RWPE1 (cell line): ENCODE measurements at regions of chr10 and their contacts with region 1.

Region 1: GRCh38 chr10:13787015-13787421 is 200.3 kb downstream of the PRPF18 start:
- DNase-seq: peak; percentile 39
- H3K27ac ChIP-seq: no peak overlapping the region
- CTCF ChIP-seq: no peak

Region 2: GRCh38 chr10:13659897-13660550 is 127.0 kb before region 1 on chr10:
- CTCF ChIA-PET with region 1: interaction called, 12 read pairs
- POLR2A ChIA-PET with region 1: no interaction called
- DNase-seq: peak; percentile 68
- H3K27ac ChIP-seq: peak overlapping the region; percentile 91
- CTCF ChIP-seq: peak; percentile 90

Region 3: GRCh38 chr10:13839430-13839990 is 52.5 kb after region 1 on chr10:
- CTCF ChIA-PET with region 1: no interaction called
- POLR2A ChIA-PET with region 1: no interaction called
- DNase-seq: peak; percentile 21
- H3K27ac ChIP-seq: no peak overlapping the region
- CTCF ChIP-seq: no peak

Region 4: GRCh38 chr10:14093730-14094484 is 306.9 kb after region 1 on chr10:
- CTCF ChIA-PET with region 1: interaction called, 11 read pairs
- POLR2A ChIA-PET with region 1: no interaction called
- DNase-seq: peak; percentile 30
- H3K27ac ChIP-seq: no peak overlapping the region
- CTCF ChIP-seq: peak; percentile 17; the same call in 1 of the 2 replicates